ENCODE measurements at regions of chr13 and their contacts with region 1.

Region 1: DNA sequence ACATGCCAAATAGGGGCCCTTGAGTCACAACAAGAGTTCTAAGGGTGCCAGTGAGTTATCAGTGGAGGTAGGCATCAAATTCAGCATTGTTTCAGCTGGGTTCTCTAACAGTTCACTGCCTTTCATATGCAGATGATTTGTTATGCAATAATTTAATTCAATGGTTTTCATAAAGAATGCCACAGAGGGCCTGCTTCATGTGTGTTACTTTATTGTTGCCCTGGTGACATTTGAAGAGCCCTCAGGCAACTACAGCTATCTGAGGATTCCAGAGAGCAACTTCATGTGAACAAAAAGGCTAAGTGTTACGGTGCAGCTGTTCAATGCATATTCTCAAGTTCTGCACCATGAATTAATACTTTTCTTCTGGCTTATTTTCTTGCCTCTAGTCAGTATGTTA is 43.1 kb upstream of the STARD13 start:
- DNase-seq: no peak
- H3K4me3 ChIP-seq: no peak overlapping the region
- CTCF ChIP-seq: no peak
- POLR2A ChIP-seq: no peak

Region 2: DNA sequence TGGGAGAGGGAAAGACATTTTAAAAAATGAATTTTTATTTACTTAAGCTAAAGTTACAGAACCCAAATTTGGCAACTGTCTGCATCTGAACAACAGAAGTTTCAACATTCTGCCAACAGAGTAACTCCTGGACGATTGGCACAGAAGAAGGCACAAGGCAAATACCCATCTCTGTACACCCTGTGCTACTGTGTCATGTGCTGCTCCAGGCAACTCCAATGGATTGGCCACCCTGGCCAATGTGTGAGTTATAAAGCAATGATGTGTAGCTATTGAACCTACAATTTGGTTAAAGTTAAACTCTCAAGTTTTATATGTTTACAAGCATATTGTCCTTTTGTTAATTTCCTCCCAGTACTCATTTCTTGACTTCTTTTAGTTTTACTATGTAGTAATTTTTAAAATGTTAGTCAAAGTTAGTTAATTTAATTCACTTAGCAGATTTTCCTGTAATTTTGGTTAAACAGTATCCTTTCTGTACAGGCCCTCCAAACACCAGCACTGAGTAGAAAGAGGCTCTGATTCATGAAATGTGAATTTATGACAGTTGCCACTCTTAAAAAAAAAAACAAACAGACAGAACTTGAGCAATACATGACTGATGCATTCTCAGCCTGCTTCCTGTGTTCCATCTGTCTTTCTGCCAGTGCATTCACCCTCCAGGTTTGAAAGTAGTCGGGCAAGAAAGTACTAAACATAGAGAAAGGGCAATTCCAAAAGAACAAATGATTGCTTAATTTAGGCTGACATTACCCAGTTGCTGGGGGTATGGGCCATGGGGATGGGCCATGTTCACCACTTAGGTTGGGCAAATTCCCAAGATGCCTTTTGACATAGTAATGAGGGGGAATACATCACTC is 49.1 kb before region 1 on chr13:
- intact Hi-C with region 1: no loop called
- DNase-seq: peak in 1 of 2 donors; percentile 63
- H3K4me3 ChIP-seq: no peak overlapping the region
- CTCF ChIP-seq: no peak
- POLR2A ChIP-seq: no peak

Region 3: GRCh38 chr13:33349986-33350826 is 21.5 kb after region 1 on chr13:
- intact Hi-C with region 1: loop called (anchors 1 kb)
- DNase-seq: peak; percentile 40 to 90
- H3K4me3 ChIP-seq: peak overlapping the region; percentile 50
- CTCF ChIP-seq: no peak
- POLR2A ChIP-seq: no peak